Panc1 (cell line): ENCODE measurements at regions of chr1 and their contacts with region 1.

Region 1: GRCh38 chr1:46616277-46617107 is at the start of gene MOB3C:
- DNase-seq: no peak
- ATAC-seq: peak; percentile 93
- H3K4me3 ChIP-seq: peak within 1 kb of the TSS; percentile 58 to 72
- H3K27ac ChIP-seq: peak within 1 kb of the TSS; percentile 80
- H3K4me1 ChIP-seq: peaks cover 14% of the 10 kb centered on the region
- H3K27me3 ChIP-seq: no peaks in the 10 kb centered on the region
- CTCF ChIP-seq: no peak
- total RNA-seq, gene MOB3C: 10.5 TPM

Region 2: GRCh38 chr1:46556822-46557221 is 59.7 kb before region 1 on chr1:
- CTCF ChIA-PET with region 1: no interaction called
- POLR2A ChIA-PET with region 1: no interaction called
- in situ Hi-C with region 1: no loop called
- intact Hi-C with region 1: no loop called
- DNase-seq: no peak
- ATAC-seq: no peak; the same call in 1 of the 2 replicates
- H3K4me3 ChIP-seq: no peak overlapping the region
- H3K27ac ChIP-seq: no peak overlapping the region
- H3K4me1 ChIP-seq: no peaks in the 10 kb centered on the region
- H3K27me3 ChIP-seq: no peaks in the 10 kb centered on the region
- CTCF ChIP-seq: no peak

Region 3: DNA sequence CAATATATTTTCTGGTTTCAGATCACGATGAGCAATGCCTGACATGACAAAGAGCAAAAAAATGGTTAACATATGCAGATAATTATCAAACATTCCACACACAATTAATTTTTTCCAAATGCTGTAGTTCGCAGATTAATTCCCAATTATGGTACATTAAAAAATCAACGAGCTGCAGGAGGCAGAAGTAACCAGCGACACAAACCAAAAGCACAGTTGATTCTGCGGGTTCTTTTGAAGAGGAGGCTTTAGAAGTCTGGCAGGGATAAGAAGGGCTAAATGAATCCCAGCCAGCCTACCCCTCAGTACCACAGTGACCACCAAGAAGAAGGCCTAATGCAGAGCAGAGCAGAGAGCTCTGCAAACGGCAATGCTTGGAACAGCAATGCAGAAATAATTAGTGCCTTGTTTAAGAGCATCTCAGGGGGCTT is 48.0 kb before region 1 on chr1:
- CTCF ChIA-PET with region 1: no interaction called
- POLR2A ChIA-PET with region 1: interaction called, 12 read pairs
- in situ Hi-C with region 1: no loop called
- intact Hi-C with region 1: no loop called
- DNase-seq: no peak
- ATAC-seq: no peak
- H3K4me3 ChIP-seq: no peak overlapping the region
- H3K27ac ChIP-seq: no peak overlapping the region
- H3K4me1 ChIP-seq: no peaks in the 10 kb centered on the region
- H3K27me3 ChIP-seq: no peaks in the 10 kb centered on the region
- CTCF ChIP-seq: no peak

Region 4: GRCh38 chr1:46603858-46604549 is 12.5 kb before region 1 on chr1 and contains the start of gene MKNK1:
- CTCF ChIA-PET with region 1: interaction called, 3 read pairs
- POLR2A ChIA-PET with region 1: interaction called, 14 read pairs
- in situ Hi-C with region 1: no loop called
- intact Hi-C with region 1: no loop called
- DNase-seq: peak; percentile 84
- ATAC-seq: peak; percentile 96
- H3K4me3 ChIP-seq: peak within 1 kb of the TSS; percentile 80 to 96
- H3K27ac ChIP-seq: peak within 1 kb of the TSS; percentile 89
- H3K4me1 ChIP-seq: peaks cover 16% of the 10 kb centered on the region
- H3K27me3 ChIP-seq: no peaks in the 10 kb centered on the region
- CTCF ChIP-seq: no peak
- total RNA-seq, gene MKNK1: 40.1 TPM

Region 5: GRCh38 chr1:46687093-46687659 is 70.7 kb after region 1 on chr1:
- CTCF ChIA-PET with region 1: no interaction called
- POLR2A ChIA-PET with region 1: no interaction called
- in situ Hi-C with region 1: no loop called
- intact Hi-C with region 1: no loop called
- DNase-seq: no peak
- ATAC-seq: no peak
- H3K4me3 ChIP-seq: no peak overlapping the region
- H3K27ac ChIP-seq: no peak overlapping the region
- H3K4me1 ChIP-seq: no peaks in the 10 kb centered on the region
- H3K27me3 ChIP-seq: no peaks in the 10 kb centered on the region
- CTCF ChIP-seq: no peak